ENCODE measurements at regions of chr22 and their contacts with region 1.

Region 1: DNA sequence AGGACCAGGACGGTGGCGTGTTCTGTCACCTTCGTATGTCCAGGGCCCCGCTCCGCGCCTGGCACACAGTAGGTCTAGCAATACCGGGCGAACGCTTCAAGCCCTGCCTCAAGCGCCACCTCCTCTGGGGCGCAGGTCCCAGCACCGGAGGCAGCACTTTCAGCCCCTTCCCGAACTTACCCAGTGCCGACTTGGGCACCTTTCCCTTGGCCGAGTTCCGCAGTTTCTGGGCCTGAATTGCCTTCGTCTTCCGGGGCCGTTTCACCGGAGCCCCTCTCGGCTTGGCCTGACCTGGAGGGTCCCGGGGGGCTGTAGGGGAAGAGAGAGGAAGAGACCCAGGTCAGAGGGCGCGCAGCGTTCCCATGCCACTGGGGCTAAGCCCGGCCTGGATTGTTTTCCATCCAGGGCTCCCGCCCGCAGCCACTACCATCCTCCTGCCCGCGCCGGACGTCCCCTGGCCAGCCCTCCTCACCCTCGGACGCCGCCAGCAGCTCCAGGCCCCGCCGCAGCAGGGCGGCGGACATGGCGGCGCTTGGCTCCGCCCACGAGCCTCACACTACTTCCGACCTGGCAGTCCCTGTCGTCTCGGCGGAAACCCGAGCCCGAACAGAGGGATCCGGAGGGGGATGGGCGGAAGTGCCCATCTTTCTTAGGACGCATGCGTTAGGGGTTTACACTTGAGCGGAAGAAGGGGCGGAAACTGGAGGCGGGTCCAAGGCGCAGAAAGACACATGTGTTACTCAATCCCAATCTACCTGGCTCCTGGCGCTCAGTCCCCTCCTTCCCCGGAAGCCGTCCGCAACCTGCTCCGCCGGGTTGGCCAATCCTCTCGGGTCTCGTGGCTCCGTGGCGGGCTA is at the start of gene RPS19BP1:
- DNase-seq: peak; percentile 98 to 100 (median 99)
- ATAC-seq: peak; percentile 87 to 92 (median 88)
- H3K4me3 ChIP-seq: peak within 1 kb of the TSS; percentile 53 to 96 (median 85)
- H3K27ac ChIP-seq: peak within 1 kb of the TSS; percentile 66 to 97 (median 92)
- H3K4me1 ChIP-seq: peaks cover 7 to 56% (median 43%) of the 10 kb centered on the region in 12 donors
- H3K27me3 ChIP-seq: no peaks in the 10 kb centered on the region
- CTCF ChIP-seq: no peak
- POLR2A ChIP-seq: peak in 1 of 2 donors; percentile 89
- total RNA-seq, gene RPS19BP1: 33.2 to 108 (median 44.5) TPM

Region 2: GRCh38 chr22:39319270-39320022 is 213.0 kb before region 1 on chr22 and contains the start of gene RPL3:
- intact Hi-C with region 1: loop called in 5 of 10 experiments (anchors 2 to 10 kb)
- DNase-seq: peak; percentile 96 to 98 (median 97)
- ATAC-seq: peak; percentile 87 to 94 (median 90)
- H3K4me3 ChIP-seq: peak within 1 kb of the TSS; percentile 58 to 93 (median 78)
- H3K27ac ChIP-seq: peak within 1 kb of the TSS; percentile 81 to 100 (median 96)
- H3K4me1 ChIP-seq: peaks cover 22 to 50% (median 42%) of the 10 kb centered on the region in 12 donors
- H3K27me3 ChIP-seq: no peaks in the 10 kb centered on the region
- CTCF ChIP-seq: peak in 6 of 12 donors; percentile 9 to 39 (median 27)
- POLR2A ChIP-seq: peak in 1 of 2 donors; percentile 79
- total RNA-seq, gene RPL3: 237 to 911 (median 336) TPM

Region 3: DNA sequence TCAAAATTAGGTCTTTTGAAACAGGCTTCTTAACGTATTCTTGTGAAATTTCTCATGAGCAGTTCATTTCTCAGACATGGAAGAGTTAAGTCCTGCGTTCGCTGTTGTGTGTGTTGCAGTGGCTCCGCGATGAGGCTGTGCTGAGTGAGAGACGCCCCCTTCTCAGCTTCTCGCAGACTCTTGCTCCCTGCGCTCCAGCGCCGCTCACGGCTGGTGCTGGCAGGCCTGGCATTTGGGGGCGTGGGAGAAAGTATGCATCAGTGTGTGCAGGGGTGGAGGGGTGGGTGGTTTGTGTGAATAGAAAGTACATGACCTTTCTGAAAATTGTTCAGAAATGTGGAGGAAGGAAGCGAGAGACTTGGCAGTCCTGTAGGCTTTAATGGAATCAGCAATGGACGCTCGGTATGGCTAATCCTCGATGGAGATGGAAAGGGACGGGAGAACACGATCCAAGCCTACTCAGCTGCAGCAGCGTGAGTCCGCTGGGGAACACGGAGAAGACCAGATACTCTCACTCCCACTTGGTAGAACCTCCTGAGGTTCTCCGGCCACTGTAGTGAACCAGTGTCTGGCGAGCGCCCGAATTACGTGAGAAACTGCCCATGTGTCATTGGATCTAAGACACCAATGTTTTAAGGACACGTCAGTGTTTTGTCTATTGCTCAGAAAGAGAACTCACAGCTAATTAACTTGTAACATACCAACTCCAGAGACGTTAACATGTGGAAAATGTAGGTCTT is 126.9 kb before region 1 on chr22:
- intact Hi-C with region 1: loop called in 1 of 10 experiments (anchors 5 kb)
- DNase-seq: peak in 1 of 5 donors; percentile 26
- ATAC-seq: peak; percentile 34 to 64 (median 62)
- H3K4me3 ChIP-seq: peak overlapping the region in 5 of 12 donors; percentile 12 to 32 (median 22)
- H3K27ac ChIP-seq: peak overlapping the region in 5 of 12 donors; percentile 3 to 51 (median 28)
- H3K4me1 ChIP-seq: peaks cover 0 to 44% (median 20%) of the 10 kb centered on the region in 12 donors
- H3K27me3 ChIP-seq: no peaks in the 10 kb centered on the region
- CTCF ChIP-seq: peak in 1 of 12 donors; percentile 17
- POLR2A ChIP-seq: no peak

Region 4: GRCh38 chr22:39808081-39808480 is 275.6 kb after region 1 on chr22:
- intact Hi-C with region 1: loop called in 2 of 10 experiments (anchors 5 to 10 kb)
- DNase-seq: no peak
- ATAC-seq: no peak
- H3K4me3 ChIP-seq: no peak overlapping the region
- H3K27ac ChIP-seq: no peak overlapping the region
- H3K4me1 ChIP-seq: no peaks in the 10 kb centered on the region
- H3K27me3 ChIP-seq: peaks cover 0 to 71% (median 10%) of the 10 kb centered on the region in 9 donors
- CTCF ChIP-seq: peak in 5 of 12 donors; percentile 9 to 30 (median 18)
- POLR2A ChIP-seq: no peak

Region 5: GRCh38 chr22:40044102-40044869 is 511.8 kb after region 1 on chr22:
- intact Hi-C with region 1: loop called in 5 of 10 experiments (anchors 5 kb)
- DNase-seq: peak; percentile 97 to 98 (median 98)
- ATAC-seq: peak; percentile 96 to 98 (median 96)
- H3K4me3 ChIP-seq: peak overlapping the region; percentile 36 to 97 (median 82)
- H3K27ac ChIP-seq: peak overlapping the region; percentile 86 to 98 (median 93)
- H3K4me1 ChIP-seq: peaks cover 3 to 48% (median 26%) of the 10 kb centered on the region in 12 donors
- H3K27me3 ChIP-seq: no peaks in the 10 kb centered on the region
- CTCF ChIP-seq: no peak
- POLR2A ChIP-seq: peak; percentile 48 to 61

Measured in heart left ventricle (tissue), 16 donors.